ENCODE measurements at regions of chr22 and their contacts with region 1.

Region 1: GRCh38 chr22:37260901-37261336 is 16.9 kb upstream of the RAC2 start:
- DNase-seq: peak; percentile 52
- ATAC-seq: peak in 1 of 2 donors; percentile 72

Region 2: DNA sequence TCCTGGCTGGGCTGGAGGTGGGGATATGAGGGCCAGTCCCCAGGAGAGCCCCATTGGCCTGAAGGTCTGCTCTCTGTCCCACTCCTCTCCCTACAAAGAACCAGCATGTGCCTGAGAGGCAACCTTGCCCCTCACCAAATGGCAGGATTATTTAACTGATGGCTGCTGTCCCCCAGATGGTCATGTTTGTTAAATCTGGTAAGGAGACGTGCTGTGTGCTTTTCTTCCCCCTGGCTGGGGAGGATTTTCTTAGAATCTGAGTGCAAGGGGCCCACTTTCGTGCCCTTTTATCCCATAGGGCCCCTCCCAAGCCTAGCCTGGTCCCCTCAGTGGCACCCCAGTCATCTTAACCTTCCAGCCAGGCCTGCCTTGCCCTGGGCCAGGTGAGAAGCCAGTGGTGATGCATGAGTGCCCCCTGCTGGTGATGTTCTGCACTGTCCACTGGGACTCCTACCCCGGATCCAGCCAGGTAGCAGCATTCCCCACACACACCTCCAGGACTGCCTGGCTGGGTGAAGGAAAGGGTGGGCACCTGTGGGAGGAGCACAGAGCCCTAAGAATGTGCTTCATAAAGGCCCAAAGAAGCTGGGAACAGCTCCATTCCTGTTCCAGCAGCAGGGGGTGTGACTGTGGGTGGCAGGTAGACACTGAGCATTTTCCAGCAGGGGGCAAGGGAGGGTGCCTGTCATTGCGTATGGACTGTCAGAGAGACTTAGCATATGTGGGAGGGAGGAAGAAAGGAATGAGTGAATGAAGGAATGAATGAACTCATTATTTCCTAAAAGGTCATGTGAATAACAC is 196.4 kb after region 1 on chr22:
- intact Hi-C with region 1: loop called in 1 of 2 experiments (anchors 5 kb)
- DNase-seq: peak; percentile 72
- ATAC-seq: peak; percentile 74 to 77